ENCODE measurements at regions of chr4 and their contacts with region 1.

Region 1: DNA sequence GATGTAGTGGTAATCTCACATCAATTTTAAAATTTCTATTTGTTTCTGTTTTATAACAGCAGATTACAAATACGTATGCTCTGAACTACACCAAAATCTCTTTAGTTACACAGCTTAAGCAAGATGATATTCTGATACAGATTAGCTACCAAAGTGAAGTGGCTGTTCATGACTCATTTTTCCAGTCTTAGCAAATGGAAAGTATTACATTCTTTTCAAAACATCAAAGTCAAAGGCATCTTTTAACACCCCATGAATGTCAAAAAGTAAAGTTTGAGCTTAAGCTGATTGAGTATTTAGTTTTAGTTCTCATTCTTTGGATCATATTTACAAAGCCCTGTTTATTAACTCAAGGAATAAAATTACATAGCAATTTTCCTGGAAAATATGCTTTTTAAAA is 6.6 kb upstream of the HPGDS start:
- DNase-seq: no peak
- H3K4me3 Mint-ChIP-seq: no peak overlapping the region
- H3K27ac Mint-ChIP-seq: peak overlapping the region; percentile 73
- H3K4me1 Mint-ChIP-seq: peaks cover 34% of the 10 kb centered on the region
- H3K27me3 Mint-ChIP-seq: peaks cover 10% of the 10 kb centered on the region

Region 2: GRCh38 chr4:93983140-93983539 is 366.1 kb before region 1 on chr4:
- intact Hi-C with region 1: no loop called
- DNase-seq: no peak
- H3K4me3 Mint-ChIP-seq: no peak overlapping the region
- H3K27ac Mint-ChIP-seq: no peak overlapping the region
- H3K4me1 Mint-ChIP-seq: no peaks in the 10 kb centered on the region
- H3K27me3 Mint-ChIP-seq: no peaks in the 10 kb centered on the region

Region 3: DNA sequence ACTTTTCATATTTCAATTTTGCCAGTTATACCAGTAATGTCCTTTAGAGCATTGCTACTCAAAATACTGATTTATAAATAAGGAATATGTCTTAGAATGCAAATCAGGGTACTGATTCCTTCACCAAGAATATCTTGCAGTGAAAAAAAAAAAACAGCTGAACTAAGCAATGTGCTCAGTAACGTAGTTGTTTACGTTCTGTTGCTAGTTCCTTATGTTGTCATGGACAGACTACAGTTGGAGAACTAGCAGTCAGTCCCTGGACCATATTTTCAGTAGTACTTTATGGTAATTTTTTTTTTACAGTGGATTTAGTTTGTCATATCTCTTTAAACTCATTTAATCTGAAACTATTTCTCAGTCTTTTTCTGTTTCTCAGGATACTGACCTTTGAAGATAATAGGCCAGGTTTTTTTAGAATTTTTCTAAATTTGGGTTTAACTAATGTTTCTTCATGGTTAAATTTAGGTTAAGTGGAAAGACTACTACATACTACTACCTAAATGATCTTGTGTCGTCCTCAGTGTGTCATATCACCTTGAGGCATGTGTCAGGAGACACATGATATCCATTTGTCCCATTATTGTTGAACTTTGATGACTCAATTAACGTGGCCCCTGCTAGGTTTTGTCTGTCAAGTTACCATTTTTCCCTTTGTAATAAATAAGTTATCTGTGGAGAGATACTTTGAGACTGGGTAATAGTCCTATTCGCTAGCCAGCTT is 120.5 kb before region 1 on chr4:
- intact Hi-C with region 1: no loop called
- DNase-seq: no peak
- H3K4me3 Mint-ChIP-seq: no peak overlapping the region
- H3K27ac Mint-ChIP-seq: no peak overlapping the region
- H3K4me1 Mint-ChIP-seq: no peaks in the 10 kb centered on the region
- H3K27me3 Mint-ChIP-seq: no peaks in the 10 kb centered on the region

Region 4: GRCh38 chr4:94338681-94339351 is 10.4 kb before region 1 on chr4:
- intact Hi-C with region 1: loop called (anchors 1 kb)
- DNase-seq: no peak
- H3K4me3 Mint-ChIP-seq: peak overlapping the region; percentile 35
- H3K27ac Mint-ChIP-seq: peak overlapping the region; percentile 85
- H3K4me1 Mint-ChIP-seq: peaks cover 27% of the 10 kb centered on the region
- H3K27me3 Mint-ChIP-seq: peaks cover 3% of the 10 kb centered on the region

Region 5: GRCh38 chr4:94390804-94391410 is 41.7 kb after region 1 on chr4:
- intact Hi-C with region 1: loop called (anchors 5 kb)
- DNase-seq: no peak
- H3K4me3 Mint-ChIP-seq: no peak overlapping the region
- H3K27ac Mint-ChIP-seq: no peak overlapping the region
- H3K4me1 Mint-ChIP-seq: no peaks in the 10 kb centered on the region
- H3K27me3 Mint-ChIP-seq: peaks cover 8% of the 10 kb centered on the region

Region 6: DNA sequence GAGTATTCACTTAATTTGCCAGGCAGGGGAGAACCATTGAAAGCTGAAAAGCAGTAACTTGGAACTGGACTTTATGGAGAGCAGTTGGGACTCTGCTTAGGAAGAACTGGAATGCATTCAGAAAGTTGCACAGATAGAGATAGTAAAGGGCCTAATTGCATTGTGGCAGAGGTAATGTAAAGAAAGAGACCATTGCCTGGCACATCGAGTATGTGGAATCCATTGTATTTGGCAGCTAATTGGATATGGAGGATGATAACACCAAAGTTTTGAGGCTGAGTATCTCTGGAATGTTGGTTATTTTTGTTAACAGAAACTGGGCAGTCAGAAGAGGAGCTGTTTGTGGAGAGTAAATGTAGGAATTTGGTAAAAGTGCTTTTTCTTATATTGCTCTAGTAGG is 578.5 kb after region 1 on chr4:
- intact Hi-C with region 1: no loop called
- DNase-seq: no peak
- H3K4me3 Mint-ChIP-seq: no peak overlapping the region
- H3K27ac Mint-ChIP-seq: no peak overlapping the region
- H3K4me1 Mint-ChIP-seq: no peaks in the 10 kb centered on the region
- H3K27me3 Mint-ChIP-seq: peaks cover 3% of the 10 kb centered on the region